ENCODE measurements at regions of chr6 and their contacts with region 1.

Region 1: GRCh38 chr6:30556066-30556905 is at the start of gene GNL1:
- DNase-seq: peak; percentile 93 to 96
- ATAC-seq: peak; percentile 81 to 87 (median 86)
- H3K4me3 ChIP-seq: peak within 1 kb of the TSS; percentile 99
- H3K27ac ChIP-seq: peak within 1 kb of the TSS; percentile 95
- H3K4me1 ChIP-seq: peaks cover 16% of the 10 kb centered on the region
- H3K27me3 ChIP-seq: no peaks in the 10 kb centered on the region
- CTCF ChIP-seq: no peak
- total RNA-seq, gene GNL1: 20.1 to 26.3 (median 24.2) TPM

Region 2: DNA sequence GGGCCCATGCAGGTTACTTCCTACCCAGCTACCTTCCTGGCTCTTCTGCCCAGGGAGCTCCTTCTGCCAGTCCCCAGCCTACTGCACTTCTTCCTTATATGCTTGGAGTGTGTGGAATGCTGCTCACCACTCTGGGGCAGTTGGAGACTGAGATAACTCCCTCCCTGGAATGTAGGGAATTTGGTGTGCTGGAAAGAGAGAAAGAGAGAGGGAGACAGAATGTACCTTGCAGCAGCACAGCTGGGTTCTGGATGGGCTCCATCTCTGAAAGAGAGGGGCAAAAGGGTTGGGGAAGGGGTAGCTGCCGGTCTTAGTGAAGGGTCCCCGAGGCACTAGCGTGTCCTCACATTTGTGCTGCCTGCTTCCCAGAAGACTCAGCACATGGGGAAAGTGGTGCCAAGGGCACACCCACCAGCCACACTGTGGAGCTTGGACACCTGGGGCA is 287.8 kb after region 1 on chr6:
- intact Hi-C with region 1: loop called in 1 of 2 experiments (anchors 5 kb)
- DNase-seq: no peak
- ATAC-seq: no peak
- H3K4me3 ChIP-seq: no peak overlapping the region
- H3K27ac ChIP-seq: no peak overlapping the region
- H3K4me1 ChIP-seq: no peaks in the 10 kb centered on the region
- H3K27me3 ChIP-seq: no peaks in the 10 kb centered on the region
- CTCF ChIP-seq: no peak